Thyroid gland (tissue), 4 donors: ENCODE measurements at regions of chr4 and their contacts with region 1.

Region 1: GRCh38 chr4:113547487-113548042 is 214.0 kb downstream of the CAMK2D start:
- DNase-seq: peak; percentile 91 to 92
- H3K4me3 ChIP-seq: no peak overlapping the region
- H3K27ac ChIP-seq: peak overlapping the region; percentile 2 to 67 (median 46)
- H3K4me1 ChIP-seq: peaks cover 0 to 8% of the 10 kb centered on the region in 2 donors
- H3K27me3 ChIP-seq: no peaks in the 10 kb centered on the region
- CTCF ChIP-seq: peak; percentile 85 to 99 (median 97)
- POLR2A ChIP-seq: peak in 1 of 2 donors; percentile 15

Region 2: DNA sequence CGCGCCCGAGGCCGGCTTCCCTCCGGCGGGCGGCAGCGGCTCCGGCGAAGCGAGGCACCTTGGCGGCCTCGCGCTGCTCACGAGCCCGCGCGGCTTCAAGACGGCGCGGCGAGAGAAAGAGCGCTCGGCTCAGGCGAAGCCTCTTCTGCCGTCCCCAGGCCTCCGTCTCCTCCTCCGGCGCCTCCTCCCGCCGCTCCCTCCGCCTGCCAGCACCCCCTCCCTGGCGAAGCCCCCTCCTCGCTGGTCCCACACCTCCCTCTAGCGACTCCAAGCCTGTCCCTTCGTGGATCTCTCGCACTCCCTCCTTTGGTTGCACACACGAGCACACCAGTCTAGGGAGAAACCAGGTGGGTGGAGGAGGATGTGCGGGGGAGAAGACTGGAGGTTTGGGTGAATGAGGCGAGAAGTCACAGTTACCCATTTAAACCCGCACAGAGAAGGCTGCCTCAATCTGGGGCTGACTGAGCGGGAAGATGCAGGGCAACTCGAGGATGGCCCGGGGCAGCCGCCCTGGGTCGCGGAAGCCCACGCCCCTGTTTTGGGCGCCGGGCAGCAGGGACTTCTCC is 214.1 kb after region 1 on chr4 and contains the start of gene CAMK2D:
- intact Hi-C with region 1: loop called (anchors 5 kb)
- DNase-seq: peak; percentile 90 to 91
- H3K4me3 ChIP-seq: peak within 1 kb of the TSS; percentile 31 to 85 (median 73)
- H3K27ac ChIP-seq: peak within 1 kb of the TSS; percentile 97 to 99 (median 99)
- H3K4me1 ChIP-seq: peaks cover 4 to 11% of the 10 kb centered on the region in 2 donors
- H3K27me3 ChIP-seq: no peaks in the 10 kb centered on the region
- CTCF ChIP-seq: peak in 4 of 6 experiments; percentile 69 to 82 (median 74)
- POLR2A ChIP-seq: peak in 1 of 2 donors; percentile 89
- total RNA-seq, gene CAMK2D: 57.3 to 78.4 (median 61.8) TPM